ENCODE measurements at regions of chr19 and their contacts with region 1.

Region 1: GRCh38 chr19:37466798-37467607 is at the start of gene ZNF569:
- DNase-seq: peak; percentile 68 to 94
- H3K4me3 ChIP-seq: peak within 1 kb of the TSS; percentile 71 to 83
- H3K27ac ChIP-seq: peak within 1 kb of the TSS; percentile 92 to 95
- H3K4me1 ChIP-seq: peaks cover 6 to 7% of the 10 kb centered on the region in 2 donors
- H3K27me3 ChIP-seq: no peaks in the 10 kb centered on the region
- CTCF ChIP-seq: no peak
- total RNA-seq, gene ZNF569: 0.11 TPM

Region 2: GRCh38 chr19:36837906-36838783 is 628.9 kb before region 1 on chr19 and contains the start of gene ZNF790:
- intact Hi-C with region 1: loop called (anchors 10 kb)
- DNase-seq: peak; percentile 62 to 94
- H3K4me3 ChIP-seq: peak within 1 kb of the TSS; percentile 66 to 67
- H3K27ac ChIP-seq: peak within 1 kb of the TSS; percentile 72 to 75
- H3K4me1 ChIP-seq: peaks cover 0 to 7% of the 10 kb centered on the region in 2 donors
- H3K27me3 ChIP-seq: no peaks in the 10 kb centered on the region
- CTCF ChIP-seq: no peak
- total RNA-seq, gene ZNF790: 17.0 TPM

Region 3: DNA sequence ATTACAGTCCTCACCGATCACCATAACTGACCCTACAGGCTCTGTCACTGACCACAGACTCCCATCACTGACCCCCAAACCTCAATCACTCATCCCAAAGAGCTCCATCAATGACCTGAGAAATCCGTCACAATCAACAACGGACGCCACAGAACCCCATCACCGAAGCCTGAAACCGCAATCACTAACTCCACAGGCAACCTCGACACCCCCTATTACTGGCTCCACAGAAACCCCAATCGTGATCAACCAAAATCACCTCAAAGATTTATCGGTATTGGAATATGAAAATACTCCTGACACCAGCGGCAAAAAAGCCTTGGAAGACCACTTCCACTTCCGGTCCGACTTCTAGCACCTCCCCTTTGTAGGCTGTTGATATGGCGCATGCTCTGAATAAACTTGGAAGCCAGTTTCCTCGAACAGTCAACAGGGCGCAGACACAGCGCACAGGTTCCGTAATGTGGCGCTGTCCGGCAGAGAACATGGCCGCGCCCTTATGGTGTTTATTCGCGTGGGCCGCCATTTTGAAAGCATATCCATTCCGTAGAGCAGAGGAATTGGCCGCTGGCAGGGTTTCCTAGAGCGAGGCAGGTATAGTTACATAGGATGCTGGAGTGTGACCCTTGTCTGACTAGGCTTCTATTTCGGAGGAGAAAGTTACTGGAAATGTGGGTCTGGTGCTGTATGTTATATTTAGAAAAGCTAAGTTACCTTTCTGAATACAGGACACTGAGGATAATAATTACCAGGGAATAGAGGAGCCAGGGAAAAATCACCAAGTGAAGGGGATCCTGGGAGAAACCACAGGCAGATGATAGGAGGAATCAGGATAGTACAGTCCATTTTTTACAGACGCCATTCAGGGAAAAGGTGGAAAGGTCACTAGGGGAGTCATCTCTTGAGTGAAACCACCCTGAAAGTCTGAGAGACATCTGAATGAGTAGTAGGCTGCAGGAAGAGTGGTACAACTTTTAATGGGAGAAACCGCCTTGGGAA is 294.3 kb before region 1 on chr19 and contains the start of gene ZNF585A:
- intact Hi-C with region 1: loop called (anchors 2 kb)
- DNase-seq: peak; percentile 85 to 97
- H3K4me3 ChIP-seq: peak within 1 kb of the TSS; percentile 59 to 65
- H3K27ac ChIP-seq: peak within 1 kb of the TSS; percentile 62 to 68
- H3K4me1 ChIP-seq: no peaks in the 10 kb centered on the region
- H3K27me3 ChIP-seq: no peaks in the 10 kb centered on the region
- CTCF ChIP-seq: peak in 1 of 3 experiments; percentile 35
- total RNA-seq, gene ZNF585A: 8.4 TPM

Region 4: GRCh38 chr19:37334179-37335071 is 132.6 kb before region 1 on chr19:
- intact Hi-C with region 1: loop called (anchors 10 kb)
- DNase-seq: peak; percentile 69 to 95
- H3K4me3 ChIP-seq: peak overlapping the region; percentile 65 to 67
- H3K27ac ChIP-seq: peak overlapping the region; percentile 57 to 77
- H3K4me1 ChIP-seq: peaks cover 0 to 12% of the 10 kb centered on the region in 2 donors
- H3K27me3 ChIP-seq: no peaks in the 10 kb centered on the region
- CTCF ChIP-seq: no peak

Region 5: GRCh38 chr19:37506387-37507166 is 39.6 kb after region 1 on chr19 and contains the start of gene ZNF793:
- intact Hi-C with region 1: loop called (anchors 1 kb)
- DNase-seq: peak; percentile 34 to 89
- H3K4me3 ChIP-seq: peak within 1 kb of the TSS; percentile 75 to 88
- H3K27ac ChIP-seq: peak within 1 kb of the TSS; percentile 82 to 98
- H3K4me1 ChIP-seq: peaks cover 0 to 4% of the 10 kb centered on the region in 2 donors
- H3K27me3 ChIP-seq: no peaks in the 10 kb centered on the region
- CTCF ChIP-seq: no peak
- total RNA-seq, gene ZNF793: 3.6 TPM